ENCODE measurements at regions of chr11 and their contacts with region 1.

Region 1: DNA sequence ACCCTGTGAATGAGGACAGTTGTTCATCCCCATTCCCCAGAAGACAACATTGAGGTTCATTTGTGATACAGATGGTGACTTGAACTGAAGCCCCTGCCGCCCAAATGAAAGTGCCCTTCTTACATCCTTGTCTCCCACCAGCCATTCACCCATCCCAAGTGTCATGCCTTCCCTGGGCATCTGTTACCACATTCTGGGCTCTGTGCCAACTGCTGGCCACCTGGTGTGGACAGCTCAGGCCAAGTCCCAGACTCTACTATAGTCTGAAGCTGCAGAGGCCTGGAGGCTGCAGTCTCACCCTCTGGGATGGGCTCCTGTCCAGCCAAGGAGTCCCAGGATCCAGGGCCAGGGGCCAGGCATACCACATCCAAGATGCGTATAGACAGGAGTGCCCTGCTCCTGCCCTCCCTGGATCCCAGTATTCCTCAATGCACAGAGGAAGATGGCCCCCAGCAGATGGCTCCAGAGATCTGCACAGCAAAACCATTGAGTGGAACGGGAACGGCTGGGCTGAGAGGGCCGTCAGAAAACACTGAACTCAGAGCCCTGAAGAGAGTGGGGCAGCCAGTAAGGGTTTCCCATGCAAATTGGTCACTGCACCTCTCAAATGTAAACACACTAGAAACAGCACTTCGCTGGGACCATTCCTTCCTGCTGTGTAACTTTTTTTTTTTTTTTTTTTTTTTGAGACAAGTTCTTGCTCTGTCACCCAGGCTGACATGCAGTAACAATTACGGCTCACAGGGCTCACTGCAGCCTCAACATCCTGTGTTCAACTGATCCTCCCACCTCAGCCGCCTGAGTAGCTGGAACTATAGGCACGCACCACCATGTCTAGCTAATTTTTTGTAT is 22.8 kb downstream of the ARRB1 start:
- DNase-seq: peak; percentile 67
- H3K4me3 Mint-ChIP-seq: no peak overlapping the region
- H3K27ac Mint-ChIP-seq: peak overlapping the region; percentile 7
- H3K4me1 Mint-ChIP-seq: peaks cover 38% of the 10 kb centered on the region
- H3K27me3 Mint-ChIP-seq: no peaks in the 10 kb centered on the region
- CTCF ChIP-seq: peak; percentile 71

Region 2: GRCh38 chr11:74895340-74896116 is 433.1 kb before region 1 on chr11:
- CTCF ChIA-PET with region 1: no interaction called
- intact Hi-C with region 1: no loop called
- DNase-seq: no peak
- H3K4me3 Mint-ChIP-seq: no peak overlapping the region
- H3K27ac Mint-ChIP-seq: peak overlapping the region; percentile 12
- H3K4me1 Mint-ChIP-seq: no peaks in the 10 kb centered on the region
- H3K27me3 Mint-ChIP-seq: no peaks in the 10 kb centered on the region
- CTCF ChIP-seq: no peak

Region 3: DNA sequence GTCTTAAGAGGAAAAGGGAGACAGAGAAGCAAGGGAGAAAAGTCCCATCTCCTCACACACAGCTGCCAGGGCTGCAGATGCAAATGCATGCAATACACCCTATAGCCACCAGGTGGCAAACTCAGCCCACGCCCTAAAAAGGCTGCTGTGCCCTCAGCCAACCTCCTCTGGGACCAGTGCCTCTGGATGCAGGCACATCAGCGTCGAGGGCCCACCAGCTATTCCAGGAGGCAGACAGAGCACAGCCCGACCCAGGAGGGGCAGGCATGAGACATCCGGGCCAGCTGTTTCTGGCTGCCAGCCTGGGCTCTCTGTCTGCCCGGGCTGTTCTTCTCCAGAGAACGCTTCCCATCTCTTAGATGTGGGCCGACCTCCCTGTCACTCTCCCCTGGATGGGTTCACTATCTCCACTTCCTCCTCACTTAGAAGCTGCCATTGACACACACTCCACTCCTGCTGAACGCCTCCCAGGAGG is 48.4 kb before region 1 on chr11:
- CTCF ChIA-PET with region 1: interaction called, 3 read pairs
- intact Hi-C with region 1: loop called (anchors 2 kb)
- DNase-seq: peak; percentile 82
- H3K4me3 Mint-ChIP-seq: no peak overlapping the region
- H3K27ac Mint-ChIP-seq: no peak overlapping the region
- H3K4me1 Mint-ChIP-seq: peaks cover 9% of the 10 kb centered on the region
- H3K27me3 Mint-ChIP-seq: no peaks in the 10 kb centered on the region
- CTCF ChIP-seq: peak; percentile 93

Measured in Calu3 (cell line).